CD8-positive, alpha-beta T cell (primary cell): ENCODE measurements at regions of chr7 and their contacts with region 1.

Region 1: GRCh38 chr7:100195222-100195621 is 17.5 kb downstream of the STAG3 start:
- DNase-seq: no peak
- ATAC-seq: no peak
- H3K4me3 ChIP-seq: no peak overlapping the region
- H3K4me3 Mint-ChIP-seq: no peak overlapping the region
- H3K27ac ChIP-seq: no peak overlapping the region
- H3K27ac Mint-ChIP-seq: no peak overlapping the region
- H3K4me1 ChIP-seq: peaks cover 18% of the 10 kb centered on the region
- H3K4me1 Mint-ChIP-seq: peaks cover 32% of the 10 kb centered on the region
- H3K27me3 ChIP-seq: no peaks in the 10 kb centered on the region
- H3K27me3 Mint-ChIP-seq: no peaks in the 10 kb centered on the region
- CTCF ChIP-seq: no peak

Region 2: GRCh38 chr7:100208911-100209408 is 13.7 kb after region 1 on chr7:
- CTCF ChIA-PET with region 1: interaction called, 18 read pairs
- POLR2A ChIA-PET with region 1: interaction called, 3 read pairs
- intact Hi-C with region 1: loop called in 1 of 2 experiments (anchors 2 kb)
- DNase-seq: peak in 3 of 9 experiments; percentile 27 to 56 (median 43)
- ATAC-seq: peak; percentile 32
- H3K4me3 ChIP-seq: no peak overlapping the region
- H3K4me3 Mint-ChIP-seq: peak overlapping the region; percentile 13
- H3K27ac ChIP-seq: no peak overlapping the region
- H3K27ac Mint-ChIP-seq: peak overlapping the region; percentile 66
- H3K4me1 ChIP-seq: peaks cover 55% of the 10 kb centered on the region
- H3K4me1 Mint-ChIP-seq: peaks cover 53% of the 10 kb centered on the region
- H3K27me3 ChIP-seq: no peaks in the 10 kb centered on the region
- H3K27me3 Mint-ChIP-seq: no peaks in the 10 kb centered on the region
- CTCF ChIP-seq: no peak